ENCODE measurements at regions of chr1 and their contacts with region 1.

Region 1: DNA sequence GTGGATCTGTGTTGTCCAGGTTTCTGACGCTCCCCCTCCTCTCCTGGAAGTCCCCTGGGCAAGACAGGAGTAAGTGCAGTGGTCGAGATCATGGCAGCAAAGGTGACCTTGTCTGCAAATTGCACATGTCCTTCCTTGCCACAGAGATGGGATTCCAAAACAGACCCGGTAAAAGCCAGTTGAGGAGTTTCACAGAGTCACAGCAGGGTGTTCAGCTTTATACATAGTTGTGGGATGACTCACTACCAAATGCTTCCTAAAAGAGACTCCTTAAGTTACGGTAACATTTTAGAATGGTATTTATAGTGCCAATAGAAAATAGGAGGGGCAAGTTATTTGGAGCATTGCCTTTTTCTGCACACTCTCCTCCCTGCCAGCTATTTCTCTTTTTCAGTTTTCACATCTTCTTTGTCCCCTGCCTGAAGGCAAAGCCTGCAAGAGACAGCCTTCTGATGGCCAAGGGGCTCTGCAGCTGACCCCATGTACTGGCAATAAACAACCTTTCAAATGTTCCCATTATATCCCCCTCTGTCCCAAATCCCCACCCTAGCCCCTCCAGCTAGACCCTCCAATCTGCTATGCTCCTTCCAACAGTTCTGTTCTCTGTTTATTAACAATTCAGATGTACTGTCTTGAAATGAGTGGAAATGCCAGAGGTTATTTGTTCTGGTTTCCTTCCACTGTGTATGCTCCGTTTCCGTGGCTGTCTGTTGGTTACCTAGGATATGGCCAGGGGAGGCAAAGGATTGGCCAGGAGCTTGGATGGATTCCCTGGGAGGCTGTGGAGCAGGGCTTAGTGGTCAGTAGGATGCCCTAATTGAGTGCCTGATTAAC is 115.0 kb downstream of the TGFB2 start:
- DNase-seq: peak; percentile 19 to 50
- H3K4me3 ChIP-seq: no peak overlapping the region
- H3K27ac ChIP-seq: peak overlapping the region; percentile 59 to 76 (median 61)
- H3K4me1 ChIP-seq: peaks cover 11 to 26% of the 10 kb centered on the region in 2 donors
- H3K27me3 ChIP-seq: no peaks in the 10 kb centered on the region
- CTCF ChIP-seq: no peak
- POLR2A ChIP-seq: no peak

Region 2: GRCh38 chr1:218345673-218346390 is 114.3 kb before region 1 on chr1:
- intact Hi-C with region 1: loop called (anchors 10 kb)
- DNase-seq: peak; percentile 73 to 82
- H3K4me3 ChIP-seq: peak overlapping the region; percentile 47 to 76 (median 56)
- H3K27ac ChIP-seq: peak overlapping the region in 2 of 3 donors; percentile 72 to 82
- H3K4me1 ChIP-seq: peaks cover 8 to 10% of the 10 kb centered on the region in 2 donors
- H3K27me3 ChIP-seq: no peaks in the 10 kb centered on the region
- CTCF ChIP-seq: peak in 2 of 6 experiments; percentile 3 to 12
- POLR2A ChIP-seq: peak in 1 of 2 donors; percentile 39

Region 3: GRCh38 chr1:218380151-218380977 is 79.7 kb before region 1 on chr1:
- intact Hi-C with region 1: loop called (anchors 10 kb)
- DNase-seq: peak; percentile 45 to 77
- H3K4me3 ChIP-seq: no peak overlapping the region
- H3K27ac ChIP-seq: peak overlapping the region in 2 of 3 donors; percentile 30 to 61
- H3K4me1 ChIP-seq: peaks cover 12 to 36% of the 10 kb centered on the region in 2 donors
- H3K27me3 ChIP-seq: no peaks in the 10 kb centered on the region
- CTCF ChIP-seq: no peak
- POLR2A ChIP-seq: no peak

Region 4: DNA sequence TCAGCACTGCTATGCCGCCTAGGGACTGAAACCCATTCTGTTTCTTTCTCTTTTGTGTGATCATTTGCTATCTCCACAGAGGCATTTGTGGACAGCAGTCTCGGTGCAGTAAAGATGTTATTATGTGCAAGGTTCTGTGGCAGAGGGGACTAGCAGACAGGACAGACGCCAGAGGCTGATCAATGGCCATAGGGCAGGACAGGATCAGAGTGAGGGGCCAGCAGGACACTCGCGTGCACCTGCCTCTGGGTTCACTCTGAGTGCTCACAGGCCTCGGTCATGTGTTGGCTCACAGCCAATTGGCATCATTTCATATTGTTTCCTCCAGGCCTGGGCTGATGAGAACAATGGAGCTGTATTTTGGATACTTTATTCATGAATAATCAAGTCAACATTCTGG is 97.6 kb after region 1 on chr1:
- intact Hi-C with region 1: no loop called
- DNase-seq: peak; percentile 60 to 63
- H3K4me3 ChIP-seq: no peak overlapping the region
- H3K27ac ChIP-seq: no peak overlapping the region
- H3K4me1 ChIP-seq: peaks cover 7 to 11% of the 10 kb centered on the region in 2 donors
- H3K27me3 ChIP-seq: no peaks in the 10 kb centered on the region
- CTCF ChIP-seq: no peak
- POLR2A ChIP-seq: no peak